H1 (cell line): ENCODE measurements at regions of chr3 and their contacts with region 1.

Region 1: GRCh38 chr3:52014613-52015012 is 18.9 kb upstream of the RPL29 start:
- DNase-seq: peak in 1 of 2 experiments; percentile 71
- H3K4me3 ChIP-seq: no peak overlapping the region
- H3K27ac ChIP-seq: no peak overlapping the region
- H3K4me1 ChIP-seq: no peaks in the 10 kb centered on the region; a peak in 1 of 7 replicates
- H3K27me3 ChIP-seq: no peaks in the 10 kb centered on the region; a peak in 1 of 7 replicates
- CTCF ChIP-seq: peak in 2 of 3 experiments; percentile 70 to 86; a peak in 3 of 4 replicates
- EP300 ChIP-seq: no peak
- POLR2A ChIP-seq: no peak
- RAD21 ChIP-seq: peak; percentile 41 to 55

Region 2: GRCh38 chr3:51929420-51930003 is 85.1 kb before region 1 on chr3:
- CTCF ChIA-PET with region 1: no interaction called
- POLR2A ChIA-PET with region 1: no interaction called
- DNase-seq: no peak
- H3K4me3 ChIP-seq: no peak overlapping the region
- H3K27ac ChIP-seq: no peak overlapping the region
- H3K4me1 ChIP-seq: no peaks in the 10 kb centered on the region
- H3K27me3 ChIP-seq: no peaks in the 10 kb centered on the region
- CTCF ChIP-seq: no peak
- EP300 ChIP-seq: no peak
- POLR2A ChIP-seq: no peak
- RAD21 ChIP-seq: no peak

Region 3: GRCh38 chr3:52028572-52028971 is 14.0 kb after region 1 on chr3:
- CTCF ChIA-PET with region 1: interaction called, 58 read pairs
- POLR2A ChIA-PET with region 1: interaction called, 5 read pairs
- DNase-seq: no peak
- H3K4me3 ChIP-seq: no peak overlapping the region
- H3K27ac ChIP-seq: no peak overlapping the region
- H3K4me1 ChIP-seq: peaks cover 0 to 2% (median 0%) of the 10 kb centered on the region in 4 experiments; a peak in 2 of 7 replicates
- H3K27me3 ChIP-seq: no peaks in the 10 kb centered on the region
- CTCF ChIP-seq: no peak
- EP300 ChIP-seq: no peak
- POLR2A ChIP-seq: no peak
- RAD21 ChIP-seq: no peak

Region 4: DNA sequence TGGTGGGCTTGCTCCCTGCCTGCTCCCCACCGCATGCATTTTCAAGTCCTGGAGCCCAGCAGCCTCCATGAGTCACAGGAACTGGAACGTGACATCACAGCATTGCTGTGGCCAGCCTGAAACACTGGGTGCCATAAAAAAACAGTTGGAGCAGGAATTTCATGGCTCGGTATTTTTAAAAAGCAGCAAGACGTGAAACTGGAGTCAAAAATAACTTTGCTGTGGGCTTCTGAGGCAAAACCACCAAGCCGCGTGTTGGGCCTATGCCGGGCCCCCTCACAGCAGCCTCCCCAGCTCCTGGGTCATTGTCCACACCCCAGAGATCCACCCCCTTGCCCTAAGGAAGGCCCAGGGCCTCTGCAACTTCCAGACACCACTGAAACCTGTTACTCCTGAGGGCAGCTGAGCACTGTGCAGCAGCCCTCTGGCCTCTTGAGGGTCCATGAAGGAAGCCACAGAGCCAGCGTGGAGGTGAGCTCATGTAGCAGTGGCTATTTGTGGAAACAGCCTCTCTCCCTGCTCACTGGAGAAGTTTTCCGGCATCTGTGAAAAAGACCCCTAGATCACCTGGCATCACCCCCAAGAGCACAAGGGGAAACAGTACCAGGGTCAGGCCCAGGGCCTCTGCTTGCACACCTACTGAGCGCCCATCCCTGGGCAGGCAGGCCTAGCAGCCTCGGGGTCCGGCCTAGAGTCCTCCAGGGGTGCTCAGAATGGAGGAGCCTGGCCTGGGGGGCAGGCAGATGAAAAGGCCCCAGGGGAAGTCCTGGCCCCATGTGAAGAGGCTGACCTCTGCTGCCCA is 75.7 kb after region 1 on chr3:
- CTCF ChIA-PET with region 1: interaction called, 168 read pairs
- POLR2A ChIA-PET with region 1: interaction called, 3 read pairs
- DNase-seq: no peak
- H3K4me3 ChIP-seq: no peak overlapping the region
- H3K27ac ChIP-seq: no peak overlapping the region
- H3K4me1 ChIP-seq: peaks cover 0 to 2% (median 0%) of the 10 kb centered on the region in 4 experiments; a peak in 2 of 7 replicates
- H3K27me3 ChIP-seq: no peaks in the 10 kb centered on the region
- CTCF ChIP-seq: no peak
- EP300 ChIP-seq: no peak
- POLR2A ChIP-seq: no peak
- RAD21 ChIP-seq: no peak

Region 5: DNA sequence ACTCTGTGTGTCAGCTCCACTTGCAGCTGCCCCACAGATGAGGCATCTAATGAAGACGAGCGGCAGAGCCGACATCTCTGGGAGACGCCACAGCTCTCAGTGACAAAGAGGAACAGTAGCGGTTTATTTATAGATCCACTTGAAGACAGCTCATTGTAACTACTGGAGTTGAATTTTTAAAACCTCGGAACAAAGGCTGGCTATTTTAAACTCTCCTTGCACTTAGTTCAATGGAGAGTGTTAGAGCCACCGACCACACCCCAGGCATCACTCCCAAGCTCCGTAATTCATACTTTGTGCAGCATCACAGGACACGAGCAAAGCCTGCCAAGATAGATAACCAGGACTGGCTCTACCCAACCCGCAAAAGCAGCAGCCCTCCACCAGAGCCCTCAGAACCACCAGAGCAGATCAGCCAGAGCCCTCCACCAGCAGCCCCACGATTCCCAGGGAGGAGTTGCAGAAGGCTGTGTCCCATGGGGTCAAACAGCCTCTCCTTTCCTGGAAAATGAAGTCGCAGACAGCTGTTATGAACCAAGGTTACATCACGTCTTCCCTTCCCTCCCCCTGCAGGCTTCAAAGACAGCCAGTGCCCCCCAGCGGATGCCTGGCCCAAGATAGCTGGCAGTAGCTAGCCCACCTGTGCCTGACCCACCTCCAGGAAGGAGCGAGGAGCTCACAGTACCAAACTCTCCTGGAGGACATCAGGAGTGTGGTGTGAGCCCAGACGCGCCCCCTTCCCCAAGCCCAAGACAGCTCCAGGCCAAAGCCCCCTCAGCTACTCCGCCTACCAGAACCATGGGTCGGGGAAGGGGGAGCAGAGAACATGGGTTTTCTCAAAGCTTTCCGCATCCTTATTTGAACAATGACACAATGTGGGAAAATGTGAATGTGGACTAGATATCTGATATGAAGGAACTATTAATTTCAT is 94.0 kb after region 1 on chr3:
- CTCF ChIA-PET with region 1: interaction called, 10 read pairs
- POLR2A ChIA-PET with region 1: no interaction called
- DNase-seq: no peak
- H3K4me3 ChIP-seq: no peak overlapping the region
- H3K27ac ChIP-seq: no peak overlapping the region
- H3K4me1 ChIP-seq: no peaks in the 10 kb centered on the region
- H3K27me3 ChIP-seq: no peaks in the 10 kb centered on the region
- CTCF ChIP-seq: peak in 2 of 3 experiments; percentile 12 to 20; a peak in 1 of 4 replicates
- EP300 ChIP-seq: no peak
- POLR2A ChIP-seq: no peak
- RAD21 ChIP-seq: peak in 1 of 2 experiments; percentile 42; a peak in 3 of 4 replicates

Region 6: GRCh38 chr3:52144034-52144795 is 129.6 kb after region 1 on chr3:
- CTCF ChIA-PET with region 1: interaction called, 15 read pairs
- POLR2A ChIA-PET with region 1: interaction called, 3 read pairs
- DNase-seq: peak; percentile 54 to 92
- H3K4me3 ChIP-seq: no peak overlapping the region
- H3K27ac ChIP-seq: 0 out of 2 replicates have a peak overlapping the region, but pooled peaks have one; percentile 3
- H3K4me1 ChIP-seq: no peaks in the 10 kb centered on the region; a peak in 2 of 7 replicates
- H3K27me3 ChIP-seq: no peaks in the 10 kb centered on the region
- CTCF ChIP-seq: peak in 2 of 3 experiments; percentile 91 to 93; a peak in 3 of 4 replicates
- EP300 ChIP-seq: no peak
- POLR2A ChIP-seq: no peak
- RAD21 ChIP-seq: peak; percentile 82 to 86